ENCODE measurements at regions of chr17 and their contacts with region 1.

Region 1: DNA sequence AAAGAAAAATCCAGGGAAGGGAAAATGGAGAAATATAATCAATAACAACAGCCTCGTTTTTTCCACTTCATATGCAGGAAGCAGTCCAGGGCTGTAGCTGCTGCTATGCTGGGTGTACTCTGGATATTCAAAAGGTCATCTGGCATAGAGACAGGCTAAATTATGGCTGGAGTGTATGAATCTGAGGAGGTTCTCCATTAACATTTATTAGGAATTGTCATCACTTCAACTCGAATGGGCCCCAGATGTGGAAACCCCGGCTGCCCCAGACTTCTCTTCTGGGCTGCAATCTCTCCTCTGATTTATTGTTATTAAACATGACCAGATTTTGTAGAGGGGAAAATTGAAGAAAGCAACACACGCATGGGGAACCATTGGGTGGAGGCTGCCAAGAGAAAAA is 33.5 kb upstream of the SKAP1 start:
- DNase-seq: no peak
- H3K4me3 ChIP-seq: no peak overlapping the region
- H3K27ac ChIP-seq: no peak overlapping the region
- H3K4me1 ChIP-seq: no peaks in the 10 kb centered on the region
- H3K27me3 ChIP-seq: peaks cover 0 to 26% of the 10 kb centered on the region in 2 donors
- CTCF ChIP-seq: no peak
- POLR2A ChIP-seq: no peak

Region 2: DNA sequence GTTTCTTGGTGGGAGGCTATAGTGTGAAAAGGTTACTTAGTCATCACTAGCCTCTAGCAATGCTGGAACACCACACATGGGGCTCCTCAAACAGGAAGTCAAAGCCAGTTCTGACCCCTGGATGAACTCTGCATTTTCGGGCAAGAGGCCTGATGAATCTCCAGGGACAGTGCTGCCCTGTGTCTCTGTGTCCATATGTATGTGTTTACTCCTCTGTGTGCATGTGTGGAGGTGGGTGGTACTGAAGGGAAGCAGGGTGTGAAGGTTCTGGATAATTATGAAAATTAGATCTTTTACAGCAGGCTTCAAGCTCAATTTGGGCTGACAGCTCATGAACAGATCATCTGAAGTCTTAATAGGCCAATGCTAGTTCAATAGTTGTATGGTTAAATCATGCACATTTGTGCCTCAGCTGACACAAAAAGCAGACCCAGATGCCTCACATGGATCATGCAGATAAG is 222.4 kb before region 1 on chr17:
- intact Hi-C with region 1: loop called (anchors 10 kb)
- DNase-seq: no peak
- H3K4me3 ChIP-seq: no peak overlapping the region
- H3K27ac ChIP-seq: peak overlapping the region; percentile 52 to 68
- H3K4me1 ChIP-seq: peaks cover 0 to 16% of the 10 kb centered on the region in 2 donors
- H3K27me3 ChIP-seq: no peaks in the 10 kb centered on the region
- CTCF ChIP-seq: no peak
- POLR2A ChIP-seq: no peak

Region 3: DNA sequence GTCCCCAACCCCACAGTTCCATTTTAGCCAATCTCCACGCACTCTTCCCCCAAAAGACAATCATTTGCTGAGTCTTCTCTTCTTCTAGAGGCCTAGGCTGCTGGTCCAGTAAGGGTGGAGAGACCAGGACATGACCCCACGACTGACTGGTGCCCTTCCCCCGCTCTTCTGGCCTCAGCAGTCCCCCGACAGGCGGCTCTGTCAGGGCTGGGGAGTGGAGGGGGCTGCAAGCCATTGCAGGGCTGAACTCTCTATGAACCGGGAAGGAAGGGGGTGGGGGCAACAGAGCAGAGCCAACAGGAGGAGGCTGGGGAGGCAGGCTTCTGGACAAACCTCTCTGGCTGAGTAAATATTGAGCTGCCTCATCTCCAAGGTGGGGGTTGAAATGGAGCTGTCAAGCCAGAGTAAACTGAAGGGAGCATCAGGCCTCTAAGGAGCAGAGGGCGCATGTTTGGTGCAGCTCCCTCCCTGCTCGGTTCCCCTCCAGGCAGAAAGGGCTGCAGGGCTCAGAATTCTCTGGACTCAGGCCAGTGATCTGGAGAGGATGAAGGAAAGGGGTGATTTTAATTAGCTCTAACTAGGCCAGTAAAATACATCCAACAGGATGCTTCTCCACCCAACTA is 58.6 kb after region 1 on chr17:
- intact Hi-C with region 1: loop called (anchors 5 kb)
- DNase-seq: peak; percentile 27 to 75
- H3K4me3 ChIP-seq: no peak overlapping the region
- H3K27ac ChIP-seq: peak overlapping the region; percentile 12 to 71
- H3K4me1 ChIP-seq: no peaks in the 10 kb centered on the region
- H3K27me3 ChIP-seq: peaks cover 0 to 8% of the 10 kb centered on the region in 2 donors
- CTCF ChIP-seq: no peak
- POLR2A ChIP-seq: no peak